T-cell (primary cell): ENCODE measurements at regions of chr6 and their contacts with region 1.

Region 1: DNA sequence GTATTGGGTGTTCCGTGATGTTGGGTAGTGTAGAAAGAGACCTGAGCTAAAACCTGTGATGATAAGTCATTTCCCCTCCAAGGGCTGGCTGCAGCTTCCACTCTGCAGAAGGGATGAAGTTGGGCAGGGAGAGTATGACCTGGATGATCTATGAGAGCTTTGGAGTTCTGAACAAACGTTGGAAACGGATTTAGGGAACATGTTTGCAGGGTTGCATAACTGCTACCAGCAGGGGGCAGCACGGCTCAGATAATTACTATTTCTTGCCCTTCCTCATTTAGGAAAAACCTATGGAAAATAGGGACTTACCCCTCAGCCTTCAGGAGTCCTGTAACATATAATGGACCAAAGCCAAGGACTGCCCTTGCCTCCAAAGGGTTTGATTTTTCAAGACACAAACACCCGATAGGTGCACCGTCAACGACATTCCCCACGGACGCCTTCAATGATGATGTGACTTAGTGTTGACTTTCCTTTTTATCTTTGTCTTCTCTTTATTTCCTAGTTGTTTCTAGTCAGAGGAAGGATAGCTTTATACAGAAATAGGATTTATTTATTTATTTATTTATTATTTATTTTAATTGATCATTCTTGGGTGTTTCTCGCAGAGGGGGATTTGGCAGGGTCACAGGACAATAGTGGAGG is 164.9 kb upstream of the SASH1 start:
- DNase-seq: peak in 9 of 35 experiments; percentile 1 to 47 (median 14)
- ATAC-seq: no peak
- H3K4me3 ChIP-seq: no peak overlapping the region
- H3K4me3 Mint-ChIP-seq: no peak overlapping the region
- H3K27ac ChIP-seq: no peak overlapping the region
- H3K27ac Mint-ChIP-seq: no peak overlapping the region
- H3K4me1 ChIP-seq: no peaks in the 10 kb centered on the region
- H3K4me1 Mint-ChIP-seq: no peaks in the 10 kb centered on the region
- H3K27me3 ChIP-seq: peaks cover 0 to 19% of the 10 kb centered on the region in 2 experiments
- H3K27me3 Mint-ChIP-seq: peaks cover 16 to 22% of the 10 kb centered on the region in 2 donors

Region 2: GRCh38 chr6:148250975-148251685 is 73.4 kb after region 1 on chr6:
- CTCF ChIA-PET with region 1: interaction called, 4 to 14 read pairs
- POLR2A ChIA-PET with region 1: no interaction called
- DNase-seq: peak in 1 of 35 experiments; percentile 47
- ATAC-seq: no peak
- H3K4me3 ChIP-seq: no peak overlapping the region
- H3K4me3 Mint-ChIP-seq: no peak overlapping the region
- H3K27ac ChIP-seq: no peak overlapping the region
- H3K27ac Mint-ChIP-seq: no peak overlapping the region
- H3K4me1 ChIP-seq: no peaks in the 10 kb centered on the region
- H3K4me1 Mint-ChIP-seq: no peaks in the 10 kb centered on the region
- H3K27me3 ChIP-seq: no peaks in the 10 kb centered on the region
- H3K27me3 Mint-ChIP-seq: peaks cover 2 to 15% of the 10 kb centered on the region in 2 donors